GM13977 (cell line): ENCODE measurements at regions of chr10 and their contacts with region 1.

Region 1: DNA sequence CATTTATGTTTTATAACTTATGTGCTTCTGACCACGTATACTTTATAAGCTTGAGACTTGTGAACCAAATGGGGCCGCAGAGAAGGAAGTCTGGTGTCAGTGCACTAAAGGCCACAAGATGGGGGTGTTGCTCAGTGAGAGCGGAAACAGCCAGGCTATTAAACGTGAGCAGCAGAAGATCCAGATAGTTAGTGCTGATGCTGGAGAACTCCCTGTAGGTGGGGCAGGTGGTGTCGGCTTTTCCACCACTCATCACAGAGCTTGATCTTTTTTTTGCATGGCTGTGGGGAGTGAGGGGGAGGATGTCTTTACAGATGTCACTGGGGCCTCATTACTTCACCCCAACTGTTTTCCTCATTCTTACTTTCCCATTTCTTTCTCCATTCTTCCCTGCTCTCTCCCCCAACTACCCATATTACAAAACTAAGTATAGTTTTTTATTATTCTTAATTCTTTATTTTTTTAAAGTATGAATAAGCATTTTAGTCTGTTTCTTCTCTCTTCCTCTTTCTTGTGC is 34.7 kb downstream of the ACADSB start:
- DNase-seq: peak; percentile 68
- CTCF ChIP-seq: peak; percentile 74

Region 2: DNA sequence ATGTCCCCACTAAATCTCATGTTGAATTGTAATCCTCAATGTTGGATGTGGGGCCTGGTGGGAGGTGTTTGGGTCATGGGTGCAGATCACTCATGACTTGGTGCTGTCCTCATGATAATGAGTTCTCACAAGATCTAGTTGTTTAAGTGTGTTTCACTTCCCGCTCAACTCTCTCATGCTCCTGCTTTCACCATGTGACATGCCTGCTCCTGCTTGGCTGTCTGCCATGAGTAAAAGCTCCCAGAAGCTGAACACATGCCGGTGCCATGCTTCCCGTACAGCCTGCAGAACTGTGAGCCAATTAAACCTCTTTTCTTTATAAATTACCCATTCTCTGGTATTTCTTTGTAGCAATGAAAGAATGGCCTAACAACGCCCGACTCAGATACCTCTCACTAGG is 69.4 kb before region 1 on chr10:
- in situ Hi-C with region 1: no loop called
- DNase-seq: no peak
- CTCF ChIP-seq: no peak

Region 3: GRCh38 chr10:123562811-123563580 is 519.5 kb after region 1 on chr10:
- in situ Hi-C with region 1: loop called (anchors 10 kb)
- DNase-seq: no peak
- CTCF ChIP-seq: no peak